A549 (cell line): ENCODE measurements at regions of chr13 and their contacts with region 1.

Region 1: GRCh38 chr13:26985285-26985878 is 186.2 kb downstream of the USP12 start:
- DNase-seq: peak; percentile 47 to 77
- ATAC-seq: peak; percentile 67 to 73
- H3K4me3 ChIP-seq: no peak overlapping the region
- H3K27ac ChIP-seq: peak overlapping the region in 1 of 2 experiments; percentile 82; a peak in 2 of 6 replicates
- H3K4me1 ChIP-seq: peaks cover 59% of the 10 kb centered on the region
- CTCF ChIP-seq: peak; percentile 77
- EP300 ChIP-seq: no peak
- POLR2A ChIP-seq: no peak
- RAD21 ChIP-seq: peak; percentile 93 to 95

Region 2: GRCh38 chr13:26855921-26856320 is 129.5 kb before region 1 on chr13:
- CTCF ChIA-PET with region 1: no interaction called
- POLR2A ChIA-PET with region 1: no interaction called
- DNase-seq: no peak
- ATAC-seq: no peak
- H3K4me3 ChIP-seq: no peak overlapping the region
- H3K27ac ChIP-seq: no peak overlapping the region
- H3K4me1 ChIP-seq: no peaks in the 10 kb centered on the region
- CTCF ChIP-seq: no peak
- EP300 ChIP-seq: no peak
- POLR2A ChIP-seq: no peak
- RAD21 ChIP-seq: no peak

Region 3: GRCh38 chr13:26965952-26966700 is 19.3 kb before region 1 on chr13:
- CTCF ChIA-PET with region 1: interaction called, 26 read pairs
- POLR2A ChIA-PET with region 1: no interaction called
- DNase-seq: no peak
- ATAC-seq: no peak
- H3K4me3 ChIP-seq: no peak overlapping the region
- H3K27ac ChIP-seq: no peak overlapping the region
- H3K4me1 ChIP-seq: peaks cover 9% of the 10 kb centered on the region
- CTCF ChIP-seq: no peak
- EP300 ChIP-seq: no peak
- POLR2A ChIP-seq: no peak
- RAD21 ChIP-seq: no peak

Region 4: GRCh38 chr13:26996965-26997752 is 11.8 kb after region 1 on chr13:
- CTCF ChIA-PET with region 1: interaction called, 20 read pairs
- POLR2A ChIA-PET with region 1: no interaction called
- DNase-seq: no peak
- ATAC-seq: no peak
- H3K4me3 ChIP-seq: no peak overlapping the region
- H3K27ac ChIP-seq: no peak overlapping the region
- H3K4me1 ChIP-seq: peaks cover 6% of the 10 kb centered on the region; the same call in 2 of the 3 replicates
- CTCF ChIP-seq: no peak
- EP300 ChIP-seq: no peak
- POLR2A ChIP-seq: no peak
- RAD21 ChIP-seq: no peak

Region 5: DNA sequence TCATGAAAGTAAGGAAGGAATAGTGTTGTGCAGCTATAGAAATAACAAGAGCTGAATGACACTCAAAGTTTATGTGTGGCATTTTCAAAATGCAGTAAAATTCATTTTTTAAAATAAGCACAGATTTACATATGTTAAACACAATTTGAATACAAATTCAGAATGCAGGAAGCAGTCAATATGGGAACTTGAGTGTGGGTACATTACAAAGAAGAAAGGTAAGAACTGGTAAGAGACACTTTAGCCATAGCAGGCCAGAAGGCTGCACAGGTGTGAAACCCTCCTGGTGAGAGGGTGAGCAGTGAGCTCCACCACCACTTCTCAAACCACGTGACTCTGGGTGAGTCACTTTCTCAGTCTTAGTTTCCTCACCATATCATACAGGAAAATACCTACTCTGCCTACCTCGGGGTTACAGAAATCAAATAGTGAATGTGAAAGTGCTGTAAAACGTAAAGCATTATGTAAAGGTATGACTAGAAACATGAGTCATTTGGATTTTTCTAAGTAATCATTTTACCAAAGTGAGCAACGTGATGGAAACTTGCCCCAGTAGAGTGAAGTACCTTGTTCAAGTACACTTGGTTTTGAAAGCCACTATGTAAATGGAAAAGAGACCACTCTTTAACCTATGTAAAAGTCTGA is 145.7 kb after region 1 on chr13:
- CTCF ChIA-PET with region 1: no interaction called
- POLR2A ChIA-PET with region 1: no interaction called
- DNase-seq: peak in 1 of 2 experiments; percentile 4
- ATAC-seq: no peak
- H3K4me3 ChIP-seq: no peak overlapping the region
- H3K27ac ChIP-seq: no peak overlapping the region
- H3K4me1 ChIP-seq: peaks cover 32% of the 10 kb centered on the region
- CTCF ChIP-seq: no peak
- EP300 ChIP-seq: no peak
- POLR2A ChIP-seq: no peak
- RAD21 ChIP-seq: no peak

Region 6: DNA sequence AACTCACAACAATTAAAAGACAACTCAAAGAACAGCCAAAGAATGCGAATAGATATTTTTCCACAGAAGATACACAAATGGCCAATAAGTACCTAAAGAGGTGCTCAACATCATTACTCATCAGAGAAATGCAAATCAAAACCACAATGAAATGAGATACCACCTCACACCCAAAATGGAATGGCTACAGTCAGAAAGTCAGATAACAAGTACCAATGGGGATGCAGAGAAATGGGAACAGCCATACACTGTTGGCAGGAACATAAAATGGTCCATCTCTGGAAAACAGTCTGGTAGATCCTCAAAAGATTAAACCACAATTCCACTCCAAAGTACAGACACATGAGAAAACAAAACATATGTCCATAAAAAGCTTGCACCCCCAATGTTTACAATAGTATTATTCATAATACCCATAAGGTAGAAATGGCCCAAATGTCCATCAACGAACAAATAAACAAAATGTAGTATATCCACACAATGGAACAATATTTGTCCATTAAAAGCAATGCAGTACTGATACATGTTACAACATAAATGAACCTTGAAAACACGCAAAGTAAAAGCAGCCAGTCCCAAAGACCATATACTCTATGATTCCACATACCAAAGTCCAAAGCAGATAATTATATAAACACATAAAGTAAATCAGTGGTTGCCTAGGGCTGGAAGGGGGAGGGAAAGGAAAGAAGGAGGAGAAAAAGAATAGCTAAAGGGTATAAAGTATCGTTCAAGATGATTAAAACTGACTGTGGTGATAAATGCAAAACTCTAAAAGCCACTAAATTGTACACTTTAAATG is 166.6 kb after region 1 on chr13:
- CTCF ChIA-PET with region 1: no interaction called
- POLR2A ChIA-PET with region 1: no interaction called
- DNase-seq: no peak
- ATAC-seq: no peak
- H3K4me3 ChIP-seq: no peak overlapping the region
- H3K27ac ChIP-seq: no peak overlapping the region
- H3K4me1 ChIP-seq: 0 out of 3 replicates have a peak, but pooled peaks cover 7% of the 10 kb centered on the region
- CTCF ChIP-seq: no peak
- EP300 ChIP-seq: no peak
- POLR2A ChIP-seq: no peak
- RAD21 ChIP-seq: no peak

Region 7: DNA sequence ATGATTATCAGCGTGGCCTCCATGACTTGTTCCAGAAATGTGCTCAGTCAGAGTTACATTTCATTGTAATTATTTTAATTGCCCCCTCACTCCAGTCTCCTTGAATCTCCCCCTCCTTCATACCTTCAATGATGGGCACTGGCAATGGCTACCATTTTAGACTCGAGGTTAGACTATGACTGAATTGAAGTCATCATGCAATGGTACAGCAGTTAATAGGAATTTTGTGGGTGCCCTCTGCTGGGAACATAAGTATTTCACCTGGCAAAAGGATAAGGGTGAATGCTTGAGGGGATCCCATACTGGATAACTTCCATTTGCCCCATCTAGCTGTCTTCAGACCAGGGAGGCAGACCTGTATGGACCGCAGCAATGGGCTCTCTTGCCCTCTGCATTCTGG is 218.5 kb after region 1 on chr13:
- CTCF ChIA-PET with region 1: interaction called, 15 read pairs
- POLR2A ChIA-PET with region 1: no interaction called
- DNase-seq: peak in 1 of 2 experiments; percentile 44
- ATAC-seq: peak; percentile 62 to 70; a peak in 5 of 6 replicates
- H3K4me3 ChIP-seq: no peak overlapping the region
- H3K27ac ChIP-seq: no peak overlapping the region
- H3K4me1 ChIP-seq: no peaks in the 10 kb centered on the region
- CTCF ChIP-seq: peak; percentile 37
- EP300 ChIP-seq: no peak
- POLR2A ChIP-seq: no peak
- RAD21 ChIP-seq: peak; percentile 55 to 62

Region 8: DNA sequence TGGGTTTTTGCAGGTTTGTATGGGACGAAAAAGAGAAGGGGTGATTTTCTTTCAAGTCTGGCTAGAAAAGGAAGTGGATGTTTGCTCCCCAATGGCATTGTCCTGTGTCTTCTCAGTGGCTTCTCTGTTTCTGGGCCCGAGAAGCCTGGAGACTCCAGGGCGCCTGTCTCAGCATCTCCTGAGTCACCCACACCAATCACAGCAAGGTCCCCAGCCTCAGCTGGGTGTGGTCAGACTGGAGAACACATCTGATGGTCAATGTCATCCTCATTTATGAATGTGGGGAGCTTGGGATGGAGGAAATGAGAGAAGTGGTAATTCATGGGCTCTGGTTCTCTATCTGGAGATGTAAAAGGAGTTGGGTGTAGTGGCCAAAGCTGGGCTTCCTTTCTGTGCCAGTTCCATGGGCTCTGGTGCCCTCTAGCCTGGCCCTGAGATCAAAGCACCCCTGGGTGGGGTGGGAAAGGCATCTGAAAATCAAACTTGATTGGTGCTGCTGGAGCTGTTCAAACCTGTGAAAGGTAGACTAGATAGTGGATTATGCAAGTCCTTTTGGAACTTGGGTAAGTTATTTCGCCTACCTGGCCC is 298.6 kb after region 1 on chr13:
- CTCF ChIA-PET with region 1: interaction called, 34 read pairs
- POLR2A ChIA-PET with region 1: no interaction called
- DNase-seq: peak; percentile 7 to 46
- ATAC-seq: peak; percentile 81 to 90
- H3K4me3 ChIP-seq: no peak overlapping the region
- H3K27ac ChIP-seq: no peak overlapping the region
- H3K4me1 ChIP-seq: no peaks in the 10 kb centered on the region
- CTCF ChIP-seq: peak; percentile 43
- EP300 ChIP-seq: no peak
- POLR2A ChIP-seq: no peak
- RAD21 ChIP-seq: peak; percentile 67 to 70

Region 9: GRCh38 chr13:27353166-27353583 is 367.8 kb after region 1 on chr13:
- CTCF ChIA-PET with region 1: interaction called, 220 read pairs
- POLR2A ChIA-PET with region 1: no interaction called
- DNase-seq: no peak
- ATAC-seq: peak; percentile 30 to 36; a peak in 4 of 6 replicates
- H3K4me3 ChIP-seq: no peak overlapping the region
- H3K27ac ChIP-seq: peak overlapping the region in 1 of 2 experiments; percentile 57; a peak in 2 of 6 replicates
- H3K4me1 ChIP-seq: no peaks in the 10 kb centered on the region
- CTCF ChIP-seq: no peak
- EP300 ChIP-seq: no peak
- POLR2A ChIP-seq: no peak
- RAD21 ChIP-seq: no peak